MCF 10A (cell line): ENCODE measurements at regions of chr20 and their contacts with region 1.

Region 1: GRCh38 chr20:37333848-37334318 is 12.1 kb upstream of the SRC start:
- DNase-seq: no peak
- H3K4me3 Mint-ChIP-seq: no peak overlapping the region
- H3K27ac Mint-ChIP-seq: no peak overlapping the region
- H3K4me1 Mint-ChIP-seq: peaks cover 17% of the 10 kb centered on the region
- H3K27me3 Mint-ChIP-seq: no peaks in the 10 kb centered on the region
- CTCF ChIP-seq: no peak

Region 2: GRCh38 chr20:37295001-37295400 is 38.9 kb before region 1 on chr20:
- CTCF ChIA-PET with region 1: interaction called, 8 read pairs
- POLR2A ChIA-PET with region 1: interaction called, 28 read pairs
- intact Hi-C with region 1: no loop called
- DNase-seq: peak; percentile 98
- H3K4me3 Mint-ChIP-seq: peak overlapping the region; percentile 49
- H3K27ac Mint-ChIP-seq: peak overlapping the region; percentile 67
- H3K4me1 Mint-ChIP-seq: peaks cover 54% of the 10 kb centered on the region
- H3K27me3 Mint-ChIP-seq: no peaks in the 10 kb centered on the region
- CTCF ChIP-seq: no peak

Region 3: GRCh38 chr20:37596890-37597536 is 263.1 kb after region 1 on chr20:
- CTCF ChIA-PET with region 1: no interaction called
- POLR2A ChIA-PET with region 1: no interaction called
- intact Hi-C with region 1: no loop called
- DNase-seq: no peak
- H3K4me3 Mint-ChIP-seq: no peak overlapping the region
- H3K27ac Mint-ChIP-seq: no peak overlapping the region
- H3K4me1 Mint-ChIP-seq: no peaks in the 10 kb centered on the region
- H3K27me3 Mint-ChIP-seq: peaks cover 42% of the 10 kb centered on the region
- CTCF ChIP-seq: no peak